SK-N-SH (cell line): ENCODE measurements at regions of chr2 and their contacts with region 1.

Region 1: GRCh38 chr2:163735685-163736432 is at the start of gene FIGN:
- DNase-seq: peak; percentile 83
- H3K4me3 ChIP-seq: peak within 1 kb of the TSS; percentile 67 to 75
- H3K27ac ChIP-seq: peak within 1 kb of the TSS; percentile 80 to 89
- H3K4me1 ChIP-seq: peaks cover 0 to 6% of the 10 kb centered on the region in 2 experiments; a peak in 2 of 4 replicates
- H3K27me3 ChIP-seq: no peaks in the 10 kb centered on the region
- CTCF ChIP-seq: no peak
- EP300 ChIP-seq: peak; percentile 21 to 29; a peak in 1 of 4 replicates
- RAD21 ChIP-seq: 0 out of 2 replicates have a peak, but pooled peaks have one; percentile 12
- polyA plus RNA-seq, gene FIGN: 0.74 and 0.75 TPM in 2 replicates

Region 2: DNA sequence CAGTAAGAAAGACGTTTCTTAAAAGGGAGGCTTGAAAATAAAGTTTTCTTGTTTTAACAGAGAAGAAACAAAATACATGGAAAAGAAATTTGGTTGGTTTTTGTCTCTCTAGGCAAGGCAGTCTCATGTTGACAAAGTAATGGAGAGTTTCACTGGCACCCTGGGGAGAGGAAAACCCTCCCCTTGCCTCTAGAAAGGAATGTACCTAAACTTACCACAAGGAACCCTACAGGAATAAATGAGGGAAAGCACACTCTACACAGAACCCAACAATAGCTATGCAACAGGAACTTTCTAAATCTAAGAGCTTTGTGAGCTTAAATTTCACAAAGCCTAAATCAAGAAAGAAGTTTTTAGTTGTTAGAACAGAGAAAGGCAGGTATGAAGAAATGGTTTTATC is 37.0 kb before region 1 on chr2:
- CTCF ChIA-PET with region 1: no interaction called
- POLR2A ChIA-PET with region 1: no interaction called
- DNase-seq: no peak
- H3K4me3 ChIP-seq: no peak overlapping the region
- H3K27ac ChIP-seq: no peak overlapping the region
- H3K4me1 ChIP-seq: peaks cover 0 to 8% of the 10 kb centered on the region in 2 experiments; a peak in 2 of 4 replicates
- H3K27me3 ChIP-seq: no peaks in the 10 kb centered on the region
- CTCF ChIP-seq: no peak
- EP300 ChIP-seq: no peak
- RAD21 ChIP-seq: no peak

Region 3: GRCh38 chr2:163713534-163714311 is 22.1 kb before region 1 on chr2:
- CTCF ChIA-PET with region 1: interaction called, 5 read pairs
- POLR2A ChIA-PET with region 1: interaction called, 12 read pairs
- DNase-seq: peak; percentile 36
- H3K4me3 ChIP-seq: peak overlapping the region in 1 of 2 experiments; percentile 12; a peak in 1 of 4 replicates
- H3K27ac ChIP-seq: peak overlapping the region in 1 of 2 experiments; percentile 29; a peak in 2 of 4 replicates
- H3K4me1 ChIP-seq: peaks cover 0 to 31% of the 10 kb centered on the region in 2 experiments; a peak in 2 of 4 replicates
- H3K27me3 ChIP-seq: no peaks in the 10 kb centered on the region
- CTCF ChIP-seq: no peak
- EP300 ChIP-seq: no peak
- RAD21 ChIP-seq: no peak